B cell (primary cell): ENCODE measurements at regions of chr6 and their contacts with region 1.

Region 1: DNA sequence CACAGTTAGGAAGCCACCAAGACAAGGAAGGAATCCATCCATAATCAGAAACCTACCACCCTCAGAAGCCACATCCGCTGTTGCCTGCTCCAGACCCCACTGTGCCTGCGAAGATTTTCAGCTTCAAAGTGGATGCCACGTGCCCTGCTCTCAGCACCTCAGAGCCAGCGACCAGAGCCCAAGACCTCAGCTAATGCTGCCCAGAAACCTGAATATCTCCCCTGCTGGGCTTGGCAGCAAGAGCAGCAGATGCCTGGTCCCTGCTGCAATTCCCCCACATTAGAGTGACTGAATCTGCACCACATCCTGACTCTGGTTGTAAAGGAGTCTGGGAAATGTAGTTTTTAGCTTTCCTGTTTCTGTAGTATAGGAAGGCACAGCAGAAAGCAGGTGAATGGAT is 10.7 kb upstream of the ULBP3 start:
- DNase-seq: no peak
- ATAC-seq: no peak
- H3K4me3 ChIP-seq: no peak overlapping the region
- H3K4me3 Mint-ChIP-seq: no peak overlapping the region
- H3K27ac ChIP-seq: no peak overlapping the region
- H3K27ac Mint-ChIP-seq: no peak overlapping the region
- H3K4me1 ChIP-seq: peaks cover 0 to 3% of the 10 kb centered on the region in 2 donors
- H3K4me1 Mint-ChIP-seq: peaks cover 2% of the 10 kb centered on the region
- H3K27me3 ChIP-seq: peaks cover 0 to 8% (median 6%) of the 10 kb centered on the region in 4 experiments
- H3K27me3 Mint-ChIP-seq: peaks cover 33% of the 10 kb centered on the region
- CTCF ChIP-seq: no peak

Region 2: GRCh38 chr6:149746147-149746946 is 333.3 kb before region 1 on chr6 and contains the start of gene NUP43:
- CTCF ChIA-PET with region 1: no interaction called
- POLR2A ChIA-PET with region 1: no interaction called
- intact Hi-C with region 1: no loop called
- DNase-seq: peak; percentile 93
- ATAC-seq: peak; percentile 67
- H3K4me3 ChIP-seq: peak within 1 kb of the TSS; percentile 74 to 97 (median 80)
- H3K4me3 Mint-ChIP-seq: peak within 1 kb of the TSS; percentile 96
- H3K27ac ChIP-seq: peak within 1 kb of the TSS; percentile 63 to 65
- H3K27ac Mint-ChIP-seq: peak within 1 kb of the TSS; percentile 90
- H3K4me1 ChIP-seq: peaks cover 23 to 29% of the 10 kb centered on the region in 2 donors
- H3K4me1 Mint-ChIP-seq: peaks cover 28% of the 10 kb centered on the region
- H3K27me3 ChIP-seq: no peaks in the 10 kb centered on the region
- H3K27me3 Mint-ChIP-seq: no peaks in the 10 kb centered on the region
- CTCF ChIP-seq: peak; percentile 71
- total RNA-seq, gene NUP43: 75.7 and 77.7 TPM in 2 replicates

Region 3: GRCh38 chr6:149934249-149935156 is 145.1 kb before region 1 on chr6:
- CTCF ChIA-PET with region 1: no interaction called
- POLR2A ChIA-PET with region 1: no interaction called
- intact Hi-C with region 1: no loop called
- DNase-seq: peak; percentile 86
- ATAC-seq: peak; percentile 44
- H3K4me3 ChIP-seq: no peak overlapping the region
- H3K4me3 Mint-ChIP-seq: no peak overlapping the region
- H3K27ac ChIP-seq: no peak overlapping the region
- H3K27ac Mint-ChIP-seq: no peak overlapping the region
- H3K4me1 ChIP-seq: peaks cover 16 to 24% of the 10 kb centered on the region in 2 donors
- H3K4me1 Mint-ChIP-seq: peaks cover 19% of the 10 kb centered on the region
- H3K27me3 ChIP-seq: peaks cover 2 to 72% (median 64%) of the 10 kb centered on the region in 4 experiments
- H3K27me3 Mint-ChIP-seq: peaks cover 80% of the 10 kb centered on the region
- CTCF ChIP-seq: peak; percentile 84

Region 4: DNA sequence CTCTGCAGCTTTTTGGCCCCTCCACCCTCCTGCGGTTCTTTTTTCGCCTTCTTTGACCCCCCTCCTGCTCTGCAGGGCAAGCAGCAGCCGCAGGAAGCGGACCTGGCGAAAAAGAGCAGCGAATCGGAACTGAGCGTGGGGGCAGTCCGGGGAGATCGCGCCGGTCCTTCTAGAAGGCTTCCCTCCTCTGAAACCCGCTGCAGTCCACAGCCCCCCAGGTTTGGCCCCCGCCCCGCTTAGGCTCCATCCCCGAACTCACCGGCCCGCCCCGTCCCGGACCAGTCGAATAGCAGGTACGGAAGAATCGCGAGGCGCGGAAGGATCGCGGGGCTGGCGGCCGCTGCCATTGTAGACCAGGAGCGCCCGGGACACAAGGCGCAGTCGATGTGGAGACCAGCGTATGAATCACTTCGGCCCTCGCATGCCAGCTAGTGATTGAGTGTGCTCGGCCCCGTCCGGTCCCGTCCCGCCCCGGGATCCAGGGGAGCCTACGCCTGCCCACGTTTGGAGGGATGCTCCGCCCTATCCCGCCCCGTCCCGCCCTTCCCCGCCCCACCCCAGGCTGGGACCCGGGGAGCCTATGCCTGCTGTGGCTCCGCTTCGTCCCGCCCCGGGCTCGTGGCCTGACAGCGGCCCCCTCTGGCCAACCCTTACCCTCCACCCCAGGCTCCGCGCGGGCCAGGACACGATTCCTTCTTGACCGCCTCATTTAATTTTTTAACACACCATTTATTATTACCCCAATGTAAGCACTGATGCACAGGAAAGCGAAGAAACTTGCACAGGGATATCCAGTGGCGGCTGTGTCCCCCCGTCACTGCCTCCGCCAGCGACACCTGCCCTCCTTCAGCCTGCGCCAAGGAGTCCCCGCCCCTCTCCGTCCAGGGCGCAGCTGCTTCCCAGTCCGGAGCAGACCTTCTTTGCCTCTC is 10.6 kb before region 1 on chr6 and contains the start of gene ULBP3:
- CTCF ChIA-PET with region 1: interaction called, 29 read pairs
- POLR2A ChIA-PET with region 1: interaction called, 3 read pairs
- intact Hi-C with region 1: no loop called
- DNase-seq: peak; percentile 80
- ATAC-seq: peak; percentile 90
- H3K4me3 ChIP-seq: peak within 1 kb of the TSS; percentile 11 to 71 (median 70)
- H3K4me3 Mint-ChIP-seq: peak within 1 kb of the TSS; percentile 87
- H3K27ac ChIP-seq: no peak within 1 kb of the TSS
- H3K27ac Mint-ChIP-seq: peak within 1 kb of the TSS; percentile 38
- H3K4me1 ChIP-seq: peaks cover 5 to 18% of the 10 kb centered on the region in 2 donors
- H3K4me1 Mint-ChIP-seq: peaks cover 23% of the 10 kb centered on the region
- H3K27me3 ChIP-seq: peaks cover 0 to 22% (median 4%) of the 10 kb centered on the region in 4 experiments
- H3K27me3 Mint-ChIP-seq: peaks cover 18% of the 10 kb centered on the region
- CTCF ChIP-seq: peak; percentile 50
- total RNA-seq, gene ULBP3: 0.61 and 0.69 TPM in 2 replicates

Region 5: DNA sequence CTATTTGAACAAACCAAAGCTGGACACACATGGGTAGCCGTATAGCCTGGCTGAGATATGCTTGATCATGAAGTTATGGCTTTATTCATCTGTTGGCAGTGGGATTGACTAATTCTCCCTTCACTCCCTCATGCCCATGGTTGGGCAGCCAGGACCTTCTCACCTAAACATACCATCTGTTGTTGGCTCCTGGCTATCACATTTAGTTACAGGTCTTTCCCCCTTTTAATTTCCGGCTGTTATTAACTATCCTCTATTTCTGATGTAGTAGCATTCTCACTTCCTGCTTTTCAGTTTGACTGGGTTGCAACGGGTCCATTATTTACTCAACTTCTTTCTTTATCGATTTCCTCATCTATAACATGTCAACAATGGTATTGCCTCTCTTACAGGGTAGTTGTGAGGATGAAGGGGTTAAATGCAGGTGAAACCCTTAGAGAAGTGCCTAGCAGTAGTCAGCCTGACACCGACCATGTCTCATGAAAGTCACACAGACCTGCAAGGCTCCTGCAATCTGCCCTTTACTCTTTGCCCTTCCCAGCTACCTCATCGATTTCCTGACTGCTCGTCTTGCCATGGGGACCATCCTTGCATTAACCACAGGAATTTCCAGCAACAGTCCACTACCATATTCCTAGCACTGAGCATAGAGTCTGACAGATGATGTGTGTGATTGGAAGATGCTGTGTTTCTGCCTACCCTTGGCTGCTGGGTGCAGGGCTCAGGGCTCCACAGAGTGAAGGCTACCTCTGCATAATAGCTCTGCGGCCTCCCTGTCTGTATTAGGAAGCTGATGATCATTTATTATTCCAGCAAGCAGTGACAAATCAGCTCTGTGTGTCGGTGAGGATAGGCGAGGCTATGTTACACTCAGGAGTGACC is 105.5 kb after region 1 on chr6:
- CTCF ChIA-PET with region 1: interaction called, 6 read pairs
- POLR2A ChIA-PET with region 1: no interaction called
- intact Hi-C with region 1: loop called (anchors 10 kb)
- DNase-seq: peak; percentile 49
- ATAC-seq: peak; percentile 53
- H3K4me3 ChIP-seq: peak overlapping the region in 1 of 5 experiments; percentile 6
- H3K4me3 Mint-ChIP-seq: peak overlapping the region; percentile 42
- H3K27ac ChIP-seq: peak overlapping the region; percentile 2 to 53
- H3K27ac Mint-ChIP-seq: peak overlapping the region; percentile 83
- H3K4me1 ChIP-seq: peaks cover 38 to 40% of the 10 kb centered on the region in 2 donors
- H3K4me1 Mint-ChIP-seq: peaks cover 43% of the 10 kb centered on the region
- H3K27me3 ChIP-seq: no peaks in the 10 kb centered on the region
- H3K27me3 Mint-ChIP-seq: no peaks in the 10 kb centered on the region
- CTCF ChIP-seq: no peak

Region 6: DNA sequence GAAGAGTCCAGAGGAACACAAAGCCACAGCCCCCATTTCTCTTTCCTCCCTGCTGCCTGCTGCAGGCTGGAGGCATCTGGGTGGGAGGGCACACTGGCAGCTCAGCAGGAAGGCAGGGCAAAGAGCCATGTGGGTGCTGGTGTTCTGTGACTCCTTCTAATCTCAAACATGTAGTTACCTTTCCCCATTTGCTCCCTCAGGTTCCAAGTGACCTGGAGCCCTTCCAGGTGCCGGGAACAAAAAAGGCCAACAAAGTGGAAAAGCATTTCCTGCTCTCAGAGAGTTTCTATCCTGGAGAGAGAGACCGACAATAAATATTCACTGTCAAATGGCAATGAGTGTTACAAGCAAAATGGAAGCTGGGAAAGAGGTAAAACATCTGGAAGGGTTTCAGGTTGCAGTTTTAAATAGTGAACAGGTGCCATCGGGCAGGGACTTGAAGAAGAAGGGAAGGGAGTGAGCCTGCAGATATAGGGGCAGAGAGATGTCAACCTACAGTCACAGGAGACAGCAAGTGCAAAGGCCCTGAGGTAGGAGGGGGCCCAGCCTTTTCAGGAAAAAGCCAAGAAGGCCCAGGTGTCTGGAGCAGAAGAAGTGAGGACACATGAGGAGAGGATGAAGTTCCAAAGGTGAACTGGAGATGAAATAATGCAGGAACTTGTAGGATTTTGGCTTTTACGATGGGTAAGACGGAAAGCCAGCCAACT is 245.6 kb after region 1 on chr6:
- CTCF ChIA-PET with region 1: interaction called, 14 read pairs
- POLR2A ChIA-PET with region 1: no interaction called
- intact Hi-C with region 1: no loop called
- DNase-seq: no peak
- ATAC-seq: no peak
- H3K4me3 ChIP-seq: no peak overlapping the region
- H3K4me3 Mint-ChIP-seq: no peak overlapping the region
- H3K27ac ChIP-seq: no peak overlapping the region
- H3K27ac Mint-ChIP-seq: no peak overlapping the region
- H3K4me1 ChIP-seq: no peaks in the 10 kb centered on the region
- H3K4me1 Mint-ChIP-seq: no peaks in the 10 kb centered on the region
- H3K27me3 ChIP-seq: peaks cover 0 to 12% (median 3%) of the 10 kb centered on the region in 4 experiments
- H3K27me3 Mint-ChIP-seq: peaks cover 24% of the 10 kb centered on the region
- CTCF ChIP-seq: no peak

Region 7: GRCh38 chr6:150334790-150335783 is 255.5 kb after region 1 on chr6:
- CTCF ChIA-PET with region 1: interaction called, 71 read pairs
- POLR2A ChIA-PET with region 1: no interaction called
- intact Hi-C with region 1: loop called (anchors 1 kb)
- DNase-seq: peak; percentile 66
- ATAC-seq: peak; percentile 45
- H3K4me3 ChIP-seq: no peak overlapping the region
- H3K4me3 Mint-ChIP-seq: no peak overlapping the region
- H3K27ac ChIP-seq: no peak overlapping the region
- H3K27ac Mint-ChIP-seq: no peak overlapping the region
- H3K4me1 ChIP-seq: no peaks in the 10 kb centered on the region
- H3K4me1 Mint-ChIP-seq: no peaks in the 10 kb centered on the region
- H3K27me3 ChIP-seq: no peaks in the 10 kb centered on the region
- H3K27me3 Mint-ChIP-seq: peaks cover 33% of the 10 kb centered on the region
- CTCF ChIP-seq: peak; percentile 88

Region 8: DNA sequence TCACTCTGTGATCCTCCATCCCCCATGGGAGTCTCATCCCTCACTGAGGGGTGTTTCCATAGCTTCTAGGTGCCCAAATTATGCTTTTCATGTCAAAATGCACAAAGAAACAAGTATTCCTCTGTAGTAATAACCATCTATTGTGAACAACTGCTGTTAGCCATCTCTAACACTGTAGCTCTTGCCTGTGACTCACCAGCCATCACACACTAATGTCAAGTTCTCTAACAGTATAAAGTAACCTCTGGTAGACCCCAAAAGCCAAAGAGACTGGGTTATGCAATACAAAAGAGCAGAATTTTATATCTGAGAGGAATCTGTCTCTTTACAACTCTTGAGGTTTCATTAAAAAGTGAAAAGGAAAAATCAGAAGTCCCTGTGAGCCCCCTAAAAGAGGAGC is 263.8 kb after region 1 on chr6:
- CTCF ChIA-PET with region 1: interaction called, 21 read pairs
- POLR2A ChIA-PET with region 1: no interaction called
- intact Hi-C with region 1: no loop called
- DNase-seq: no peak
- ATAC-seq: no peak
- H3K4me3 ChIP-seq: no peak overlapping the region
- H3K4me3 Mint-ChIP-seq: no peak overlapping the region
- H3K27ac ChIP-seq: no peak overlapping the region
- H3K27ac Mint-ChIP-seq: no peak overlapping the region
- H3K4me1 ChIP-seq: peaks cover 4 to 9% of the 10 kb centered on the region in 2 donors
- H3K4me1 Mint-ChIP-seq: peaks cover 5% of the 10 kb centered on the region
- H3K27me3 ChIP-seq: peaks cover 0 to 4% (median 2%) of the 10 kb centered on the region in 4 experiments
- H3K27me3 Mint-ChIP-seq: peaks cover 22% of the 10 kb centered on the region
- CTCF ChIP-seq: no peak

Region 9: DNA sequence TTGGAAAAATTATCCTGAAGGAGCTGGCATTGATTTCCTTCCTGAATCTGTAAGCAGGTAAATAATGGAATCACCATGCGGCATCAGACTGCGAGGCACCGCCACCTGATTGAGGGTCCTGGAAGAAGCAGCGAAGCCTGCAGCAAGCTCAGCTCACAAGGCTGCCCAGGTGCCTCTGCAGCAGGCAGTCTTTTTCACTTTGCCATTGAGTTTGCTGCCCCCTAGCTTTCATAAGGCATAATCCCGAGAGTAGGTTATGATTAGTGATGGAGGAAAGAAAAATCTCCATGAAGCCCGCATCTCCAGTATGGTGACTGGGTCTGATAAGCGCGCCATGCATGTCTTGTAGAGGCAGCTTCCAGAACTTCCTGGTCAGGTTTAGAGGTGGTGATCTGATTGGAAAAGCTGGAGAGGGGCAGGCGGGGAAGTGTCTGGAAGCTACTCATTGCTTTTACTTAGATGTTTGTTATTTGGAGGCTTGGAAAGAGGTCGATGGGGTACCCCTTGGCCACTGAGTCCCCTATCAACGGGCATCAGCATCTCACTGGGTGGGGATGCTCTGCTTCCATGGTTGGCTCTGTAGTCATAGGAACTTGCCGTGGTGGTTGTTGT is 315.9 kb after region 1 on chr6:
- CTCF ChIA-PET with region 1: interaction called, 98 read pairs
- POLR2A ChIA-PET with region 1: no interaction called
- intact Hi-C with region 1: no loop called
- DNase-seq: peak; percentile 65
- ATAC-seq: peak; percentile 74
- H3K4me3 ChIP-seq: no peak overlapping the region
- H3K4me3 Mint-ChIP-seq: no peak overlapping the region
- H3K27ac ChIP-seq: no peak overlapping the region
- H3K27ac Mint-ChIP-seq: no peak overlapping the region
- H3K4me1 ChIP-seq: no peaks in the 10 kb centered on the region
- H3K4me1 Mint-ChIP-seq: no peaks in the 10 kb centered on the region
- H3K27me3 ChIP-seq: peaks cover 0 to 7% (median under 1%) of the 10 kb centered on the region in 4 experiments
- H3K27me3 Mint-ChIP-seq: peaks cover 26% of the 10 kb centered on the region
- CTCF ChIP-seq: peak; percentile 84